ENCODE measurements at regions of chr3 and their contacts with region 1.

Region 1: DNA sequence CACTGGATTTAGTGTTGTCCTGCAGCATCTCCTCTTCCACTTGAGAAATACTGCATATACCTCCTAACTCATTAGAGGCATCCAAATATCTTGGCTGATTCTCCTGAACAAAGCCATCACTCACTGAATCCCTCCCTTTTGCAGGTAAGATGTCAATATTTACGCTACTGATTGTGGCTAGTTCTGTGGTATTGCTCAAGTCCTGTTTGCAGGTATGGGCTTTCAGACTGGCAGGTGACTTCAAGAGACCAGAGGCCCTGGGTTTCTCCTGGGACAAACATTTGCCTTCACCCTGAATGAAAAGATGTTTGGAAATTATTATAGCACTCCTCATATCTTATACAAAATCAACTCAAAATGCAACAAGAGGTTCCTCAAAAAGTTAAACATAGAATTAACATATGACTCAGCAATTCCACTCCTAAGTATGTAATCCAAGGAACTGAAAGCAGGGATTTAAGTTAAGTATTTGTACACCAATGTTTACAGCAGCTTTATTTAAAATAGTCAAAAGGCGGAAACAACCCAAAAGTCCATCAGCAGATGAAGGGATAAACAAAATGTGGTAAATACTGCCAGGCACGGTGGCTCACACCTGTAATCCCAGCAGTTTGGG is 18.6 kb downstream of the NEK4 start:
- DNase-seq: no peak
- ATAC-seq: no peak

Region 2: GRCh38 chr3:52845691-52846431 is 93.7 kb after region 1 on chr3:
- intact Hi-C with region 1: no loop called
- DNase-seq: no peak
- ATAC-seq: peak; percentile 5 to 16

Region 3: GRCh38 chr3:52907497-52907896 is 155.3 kb after region 1 on chr3:
- intact Hi-C with region 1: loop called in 1 of 2 experiments (anchors 10 kb)
- DNase-seq: no peak
- ATAC-seq: no peak

Measured in left cardiac atrium (tissue), 4 donors.